ENCODE measurements at regions of chr7 and their contacts with region 1.

Region 1: DNA sequence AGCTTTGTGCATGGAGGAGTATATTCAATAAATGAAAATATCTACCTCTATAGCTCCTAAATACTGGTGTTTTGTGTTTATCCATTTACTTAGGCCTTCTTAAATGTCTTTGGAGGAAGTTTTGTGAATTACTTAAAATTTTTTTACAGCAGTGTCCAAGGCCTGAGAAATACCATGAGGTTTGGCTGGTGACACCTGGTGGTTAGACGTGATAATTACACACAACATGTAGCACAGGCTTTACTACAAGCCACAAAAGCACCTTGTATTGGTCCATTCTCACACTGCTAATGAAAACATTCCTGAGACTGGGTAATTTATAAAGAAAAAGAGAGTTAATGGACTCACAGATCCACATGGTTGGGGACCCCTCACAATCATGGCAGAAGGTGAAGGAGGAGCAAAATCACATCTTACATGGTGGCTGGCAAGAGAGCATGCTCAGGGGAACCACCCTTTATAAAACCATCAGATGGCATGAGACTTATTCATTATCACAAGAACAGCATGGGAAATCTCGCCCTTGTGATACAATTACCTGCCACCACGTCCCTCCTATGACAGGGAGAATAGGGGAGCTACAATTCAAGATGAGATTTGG is 20.6 kb downstream of the HYAL4 start:
- DNase-seq: peak; percentile 61
- ATAC-seq: peak; percentile 85
- H3K4me3 Mint-ChIP-seq: no peak overlapping the region
- H3K27ac Mint-ChIP-seq: no peak overlapping the region
- H3K4me1 Mint-ChIP-seq: no peaks in the 10 kb centered on the region
- H3K27me3 Mint-ChIP-seq: peaks cover 11% of the 10 kb centered on the region

Region 2: DNA sequence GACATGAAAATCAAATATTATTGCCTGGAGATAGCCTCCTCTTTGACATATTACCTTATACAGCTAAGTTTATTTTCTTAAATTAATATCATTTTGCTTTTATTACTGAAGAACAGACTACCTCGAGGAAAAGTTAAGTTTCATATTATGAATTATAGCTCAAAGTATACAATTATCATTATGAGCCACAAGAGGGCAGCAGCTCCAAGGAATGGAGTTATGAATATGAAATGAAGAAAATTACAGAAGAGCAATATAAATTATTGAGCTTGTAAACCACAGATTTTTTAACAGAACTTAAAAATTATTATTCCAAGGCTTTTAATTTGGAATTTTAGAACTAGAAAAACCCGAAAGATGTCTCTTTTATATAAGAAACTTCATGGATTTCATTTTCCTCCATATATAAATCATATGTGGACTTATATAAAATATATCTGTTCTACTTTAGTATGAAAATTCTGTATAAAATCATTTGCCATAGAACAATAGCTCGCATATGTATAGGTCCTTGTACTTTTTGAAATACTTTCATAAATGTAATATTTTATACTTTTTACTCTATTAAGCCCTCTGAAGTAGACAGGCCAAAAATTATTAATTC is 371.3 kb before region 1 on chr7:
- CTCF ChIA-PET with region 1: interaction called, 4 read pairs
- POLR2A ChIA-PET with region 1: no interaction called
- intact Hi-C with region 1: loop called in 1 of 2 experiments (anchors 2 kb)
- DNase-seq: peak; percentile 41
- ATAC-seq: no peak
- H3K4me3 Mint-ChIP-seq: no peak overlapping the region
- H3K27ac Mint-ChIP-seq: no peak overlapping the region
- H3K4me1 Mint-ChIP-seq: no peaks in the 10 kb centered on the region
- H3K27me3 Mint-ChIP-seq: peaks cover 10% of the 10 kb centered on the region

Region 3: GRCh38 chr7:123635551-123636359 is 229.9 kb before region 1 on chr7:
- CTCF ChIA-PET with region 1: interaction called, 4 read pairs
- POLR2A ChIA-PET with region 1: no interaction called
- intact Hi-C with region 1: loop called (anchors 1 to 5 kb)
- DNase-seq: no peak
- ATAC-seq: no peak
- H3K4me3 Mint-ChIP-seq: no peak overlapping the region
- H3K27ac Mint-ChIP-seq: no peak overlapping the region
- H3K4me1 Mint-ChIP-seq: no peaks in the 10 kb centered on the region
- H3K27me3 Mint-ChIP-seq: peaks cover 21% of the 10 kb centered on the region

Region 4: GRCh38 chr7:123792547-123792946 is 73.1 kb before region 1 on chr7:
- CTCF ChIA-PET with region 1: interaction called, 71 read pairs
- POLR2A ChIA-PET with region 1: no interaction called
- intact Hi-C with region 1: no loop called
- DNase-seq: no peak
- ATAC-seq: no peak
- H3K4me3 Mint-ChIP-seq: no peak overlapping the region
- H3K27ac Mint-ChIP-seq: no peak overlapping the region
- H3K4me1 Mint-ChIP-seq: peaks cover 4% of the 10 kb centered on the region
- H3K27me3 Mint-ChIP-seq: peaks cover 4% of the 10 kb centered on the region

Region 5: DNA sequence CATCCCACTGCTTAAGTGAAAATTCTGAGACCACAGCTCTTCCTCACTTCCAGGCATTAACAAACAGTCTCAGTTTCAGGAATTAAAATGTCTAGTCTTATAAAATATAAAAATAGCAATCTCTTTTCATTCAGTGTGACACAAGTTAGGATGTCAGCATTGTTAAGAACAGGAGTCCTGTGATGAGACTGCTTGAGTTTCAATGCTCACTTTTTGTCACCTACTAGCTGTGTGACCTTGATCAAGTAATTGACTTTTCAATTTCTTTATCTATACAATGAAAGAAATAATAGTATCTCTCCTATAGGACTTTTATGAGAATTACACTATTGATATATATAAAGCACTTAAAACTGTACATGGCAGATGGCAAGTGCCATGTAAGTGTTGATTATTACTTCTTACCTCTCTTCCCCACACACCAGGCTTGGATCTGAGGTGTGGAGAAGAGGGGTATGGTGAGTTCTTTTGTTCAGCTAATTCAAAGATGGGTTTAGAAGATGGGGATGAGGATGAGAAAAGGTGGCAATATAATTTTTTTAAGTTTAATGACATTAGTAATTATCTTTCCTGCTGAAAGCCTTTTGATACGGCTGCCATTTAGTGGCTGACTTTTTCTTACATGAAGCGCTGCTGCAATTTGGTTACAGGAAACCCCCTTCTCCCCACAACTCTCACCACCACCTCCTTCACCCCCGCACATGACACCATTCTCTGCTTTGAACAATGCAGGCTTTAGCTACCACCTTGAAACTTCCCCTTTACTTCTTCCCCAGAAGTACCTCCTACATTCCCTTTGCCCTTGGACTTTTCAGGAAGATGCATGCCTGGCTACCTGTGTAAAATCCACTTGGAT is 41.5 kb before region 1 on chr7:
- CTCF ChIA-PET with region 1: no interaction called
- POLR2A ChIA-PET with region 1: no interaction called
- intact Hi-C with region 1: loop called (anchors 2 kb)
- DNase-seq: peak; percentile 81
- ATAC-seq: peak; percentile 90
- H3K4me3 Mint-ChIP-seq: peak overlapping the region; percentile 56
- H3K27ac Mint-ChIP-seq: peak overlapping the region; percentile 68
- H3K4me1 Mint-ChIP-seq: peaks cover 23% of the 10 kb centered on the region
- H3K27me3 Mint-ChIP-seq: peaks cover 15% of the 10 kb centered on the region